ENCODE measurements at regions of chr19 and their contacts with region 1.

Region 1: DNA sequence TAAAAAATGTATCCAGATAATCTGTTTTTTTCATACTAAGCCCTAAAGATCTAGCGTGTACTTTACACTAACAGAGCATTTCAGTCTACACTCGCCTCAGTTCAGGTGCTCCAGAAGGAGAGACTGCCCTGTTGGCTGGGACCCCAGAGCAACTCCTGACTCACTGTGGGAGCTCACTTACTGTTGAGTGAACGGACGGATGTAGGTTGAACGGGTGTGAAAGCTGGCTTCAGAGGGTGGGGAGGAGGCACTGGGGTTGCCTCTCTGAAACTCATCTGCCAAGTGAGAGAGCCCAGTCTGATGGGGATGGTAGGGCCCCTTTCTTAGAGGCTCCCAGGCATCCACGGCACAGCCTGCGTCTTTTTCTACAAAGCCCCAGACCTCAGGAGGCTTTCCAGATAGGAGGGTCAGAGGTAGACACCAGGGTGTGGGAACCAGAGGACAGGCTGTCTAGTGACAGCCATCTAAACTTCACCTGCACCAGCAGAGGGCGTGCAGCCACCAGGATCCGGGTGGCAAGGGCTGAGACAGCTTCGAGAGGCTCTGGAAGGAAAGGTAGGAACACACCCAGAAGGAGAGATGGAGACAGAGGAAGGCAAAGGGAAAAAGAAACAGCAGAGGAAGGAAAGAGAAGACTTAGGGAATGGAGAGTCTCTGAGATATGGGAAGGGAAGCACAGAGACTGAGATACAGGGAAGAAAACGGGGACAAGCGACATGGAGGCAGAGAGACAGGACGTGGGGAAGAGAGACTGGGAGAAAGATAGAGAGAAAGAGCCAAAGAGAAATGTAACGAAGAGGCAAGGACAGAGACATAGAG is 3.7 kb downstream of the KASH5 start:
- DNase-seq: peak; percentile 74 to 82 (median 78)
- H3K4me3 ChIP-seq: peak overlapping the region in 1 of 7 experiments; percentile 7
- H3K27ac ChIP-seq: no peak overlapping the region
- H3K4me1 ChIP-seq: peaks cover 0 to 10% (median 4%) of the 10 kb centered on the region in 4 experiments
- H3K27me3 ChIP-seq: peaks cover 0 to 4% (median 0%) of the 10 kb centered on the region in 5 experiments

Region 2: DNA sequence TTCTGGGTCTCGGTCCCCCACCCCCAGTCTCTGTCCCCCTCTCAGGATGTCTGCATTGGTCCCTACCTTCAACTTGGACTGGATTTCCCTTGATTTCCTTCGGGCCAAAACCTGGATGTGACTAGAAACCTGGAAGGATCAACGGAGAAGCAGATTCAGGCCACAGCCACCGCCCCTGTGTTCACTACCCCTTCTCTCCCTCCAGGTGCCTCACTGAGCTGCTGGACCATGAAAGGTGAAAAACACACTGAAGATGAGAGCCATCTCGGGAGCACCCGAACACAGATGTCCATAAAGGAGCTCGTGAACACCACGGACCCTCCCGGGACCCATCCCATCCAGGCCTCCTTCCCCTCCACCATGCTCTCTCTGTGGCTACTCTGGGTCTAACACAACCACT is 34.6 kb before region 1 on chr19:
- CTCF ChIA-PET with region 1: no interaction called
- POLR2A ChIA-PET with region 1: no interaction called
- DNase-seq: no peak
- H3K4me3 ChIP-seq: no peak overlapping the region
- H3K27ac ChIP-seq: no peak overlapping the region
- H3K4me1 ChIP-seq: peaks cover 0 to 22% (median 15%) of the 10 kb centered on the region in 4 experiments
- H3K27me3 ChIP-seq: peaks cover 0 to 18% (median 3%) of the 10 kb centered on the region in 5 experiments

Region 3: DNA sequence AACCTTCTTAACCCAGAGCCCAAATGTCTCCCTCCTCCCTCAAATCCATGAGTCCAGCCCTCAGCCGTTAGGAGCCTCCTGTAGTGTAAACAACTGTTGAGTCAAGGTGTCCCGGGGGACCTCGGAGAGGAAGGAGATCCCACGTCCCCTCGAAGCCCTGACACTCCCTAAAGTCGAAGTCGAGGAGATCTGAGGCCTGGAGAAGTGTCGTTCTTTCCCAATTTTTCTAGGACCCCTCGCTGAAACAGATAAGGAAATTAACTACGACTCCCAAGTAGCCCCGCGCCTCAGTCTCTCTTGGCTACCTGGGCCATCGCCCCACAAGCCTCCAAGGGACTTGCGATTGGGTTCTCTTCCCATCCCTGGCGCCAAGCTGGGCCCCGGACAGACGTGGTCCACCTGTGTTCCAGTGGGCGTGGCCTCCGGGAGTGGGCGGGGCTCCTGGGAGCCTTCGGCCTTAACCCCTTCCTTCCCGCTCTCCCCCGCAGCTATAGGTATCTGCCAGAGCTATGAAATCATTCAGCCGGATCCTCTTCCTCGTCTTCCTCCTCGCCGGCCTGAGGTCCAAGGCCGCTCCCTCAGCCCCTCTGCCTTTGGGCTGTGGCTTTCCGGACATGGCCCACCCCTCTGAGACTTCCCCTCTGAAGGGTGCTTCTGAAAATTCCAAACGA is 34.3 kb after region 1 on chr19:
- CTCF ChIA-PET with region 1: interaction called, 11 read pairs
- POLR2A ChIA-PET with region 1: interaction called, 4 read pairs
- DNase-seq: no peak
- H3K4me3 ChIP-seq: no peak overlapping the region
- H3K27ac ChIP-seq: no peak overlapping the region
- H3K4me1 ChIP-seq: peaks cover 0 to 39% (median 36%) of the 10 kb centered on the region in 4 experiments
- H3K27me3 ChIP-seq: peaks cover 0 to 98% (median 60%) of the 10 kb centered on the region in 5 experiments

Region 4: GRCh38 chr19:49443366-49444099 is 51.7 kb after region 1 on chr19:
- CTCF ChIA-PET with region 1: interaction called, 12 read pairs
- POLR2A ChIA-PET with region 1: no interaction called
- DNase-seq: peak; percentile 94 to 95 (median 95)
- H3K4me3 ChIP-seq: peak overlapping the region; percentile 43 to 79 (median 69)
- H3K27ac ChIP-seq: no peak overlapping the region
- H3K4me1 ChIP-seq: peaks cover 0 to 22% (median 15%) of the 10 kb centered on the region in 4 experiments
- H3K27me3 ChIP-seq: peaks cover 2 to 40% (median 28%) of the 10 kb centered on the region in 5 experiments

Region 5: GRCh38 chr19:49468746-49469447 is 77.1 kb after region 1 on chr19:
- CTCF ChIA-PET with region 1: interaction called, 23 read pairs
- POLR2A ChIA-PET with region 1: interaction called, 4 read pairs
- DNase-seq: peak; percentile 93 to 98 (median 96)
- H3K4me3 ChIP-seq: no peak overlapping the region
- H3K27ac ChIP-seq: peak overlapping the region; percentile 36 to 61
- H3K4me1 ChIP-seq: peaks cover 4 to 47% (median 44%) of the 10 kb centered on the region in 4 experiments
- H3K27me3 ChIP-seq: no peaks in the 10 kb centered on the region

Region 6: DNA sequence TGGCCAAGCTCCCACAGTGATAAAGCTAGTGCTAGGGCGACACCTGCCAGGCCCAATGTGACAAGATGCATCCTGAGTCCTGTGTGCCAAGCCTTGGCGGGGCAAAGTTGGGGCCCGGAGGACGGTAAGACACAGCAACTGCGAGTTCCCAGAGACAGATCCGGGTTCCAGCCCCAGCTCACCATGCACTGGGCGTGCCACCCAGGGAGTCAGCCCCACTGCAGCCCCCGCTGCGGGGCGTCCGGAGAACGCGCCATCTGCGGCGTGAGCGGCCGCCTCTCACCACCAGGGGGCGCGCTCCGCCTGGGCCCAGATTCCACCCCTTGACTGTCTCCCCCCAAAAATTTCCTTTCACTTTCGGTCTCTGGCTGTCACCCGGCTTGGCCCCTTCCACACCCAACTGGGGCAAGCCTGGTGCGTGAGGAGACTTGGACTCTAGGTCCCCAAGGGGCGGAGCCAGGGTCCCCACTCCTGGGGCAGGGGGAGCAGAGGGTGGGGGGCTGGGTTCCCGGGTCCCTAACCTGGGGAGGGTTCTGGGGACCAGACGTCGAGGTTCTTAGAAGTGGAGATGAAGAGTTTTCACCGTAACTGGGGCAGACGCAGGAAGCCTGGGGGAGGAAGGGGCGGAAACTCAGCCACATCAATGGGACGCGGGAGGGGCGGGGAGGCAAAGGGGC is 82.2 kb after region 1 on chr19 and contains the start of gene FLT3LG:
- CTCF ChIA-PET with region 1: interaction called, 23 read pairs
- POLR2A ChIA-PET with region 1: interaction called, 4 read pairs
- DNase-seq: peak; percentile 88 to 93 (median 92)
- H3K4me3 ChIP-seq: peak within 1 kb of the TSS; percentile 51 to 81 (median 65)
- H3K27ac ChIP-seq: peak within 1 kb of the TSS in 1 of 2 experiments; percentile 79
- H3K4me1 ChIP-seq: peaks cover 4 to 56% (median 51%) of the 10 kb centered on the region in 4 experiments
- H3K27me3 ChIP-seq: no peaks in the 10 kb centered on the region